Right lobe of liver (tissue), 6 donors: ENCODE measurements at regions of chrX and their contacts with region 1.

Region 1: GRCh38 chrX:103806862-103807474 is 25.1 kb downstream of the RAB9B start:
- DNase-seq: no peak
- ATAC-seq: no peak
- H3K4me3 ChIP-seq: no peak overlapping the region
- H3K27ac ChIP-seq: no peak overlapping the region
- H3K4me1 ChIP-seq: no peaks in the 10 kb centered on the region
- H3K27me3 ChIP-seq: peaks cover 0 to 23% of the 10 kb centered on the region in 2 donors
- CTCF ChIP-seq: no peak
- POLR2A ChIP-seq: no peak

Region 2: GRCh38 chrX:103697687-103698086 is 109.3 kb before region 1 on chrX:
- intact Hi-C with region 1: loop called in 1 of 2 experiments (anchors 10 kb)
- DNase-seq: no peak
- ATAC-seq: no peak
- H3K4me3 ChIP-seq: no peak overlapping the region
- H3K27ac ChIP-seq: no peak overlapping the region
- H3K4me1 ChIP-seq: no peaks in the 10 kb centered on the region
- H3K27me3 ChIP-seq: no peaks in the 10 kb centered on the region
- CTCF ChIP-seq: no peak
- POLR2A ChIP-seq: no peak